Left ventricle myocardium superior (tissue), 1 donor: ENCODE measurements at regions of chr5 and their contacts with region 1.

Region 1: GRCh38 chr5:114305402-114306211 is 56.3 kb upstream of the KCNN2 start:
- DNase-seq: no peak
- ATAC-seq: peak; percentile 19

Region 2: DNA sequence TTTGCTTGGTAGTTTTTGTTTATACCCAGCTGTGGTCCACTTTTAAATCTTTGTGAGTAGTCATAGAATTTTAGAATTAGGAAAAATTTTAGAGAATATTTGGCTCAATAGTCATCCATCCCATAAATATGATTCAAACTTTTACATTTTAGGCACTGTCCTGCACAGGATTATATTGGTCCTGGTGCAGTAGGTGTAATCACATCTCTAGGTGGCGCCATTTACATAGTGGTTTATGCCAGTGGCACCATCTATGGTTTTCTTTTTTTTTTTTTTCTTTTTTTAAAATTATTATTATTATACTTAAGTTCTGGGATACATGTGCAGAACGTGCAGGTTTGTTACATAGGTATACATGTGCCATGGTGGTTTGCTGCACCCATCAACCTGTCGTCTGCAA is 204.5 kb before region 1 on chr5:
- intact Hi-C with region 1: loop called (anchors 10 kb)
- DNase-seq: no peak
- ATAC-seq: peak; percentile 52